CD4-positive, alpha-beta memory T cell (primary cell): ENCODE measurements at regions of chr15 and their contacts with region 1.

Region 1: DNA sequence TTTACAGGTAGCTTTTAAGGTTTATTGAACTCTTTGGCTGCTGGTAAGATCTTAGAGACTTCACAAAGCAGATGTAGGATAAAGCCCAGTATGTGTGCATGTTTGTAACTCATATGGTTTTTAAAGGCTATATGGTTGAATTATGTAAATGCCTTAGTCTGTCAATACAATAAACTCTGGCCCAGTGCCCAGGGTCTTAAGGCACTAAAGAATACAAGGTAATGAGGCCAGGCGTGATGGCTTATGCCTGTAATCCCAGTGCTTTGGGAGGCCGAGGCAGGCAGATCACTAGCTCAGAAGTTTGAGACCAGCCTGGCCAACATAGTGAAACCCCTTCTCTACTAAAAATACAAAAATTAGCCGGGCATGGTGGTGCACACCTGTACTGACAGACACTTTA is 170.3 kb upstream of the CGNL1 start:
- DNase-seq: no peak
- H3K4me3 ChIP-seq: no peak overlapping the region
- H3K4me3 Mint-ChIP-seq: no peak overlapping the region
- H3K27ac ChIP-seq: no peak overlapping the region
- H3K27ac Mint-ChIP-seq: no peak overlapping the region
- H3K4me1 ChIP-seq: no peaks in the 10 kb centered on the region
- H3K4me1 Mint-ChIP-seq: peaks cover 5 to 9% (median 7%) of the 10 kb centered on the region in 4 donors
- H3K27me3 ChIP-seq: no peaks in the 10 kb centered on the region
- H3K27me3 Mint-ChIP-seq: no peaks in the 10 kb centered on the region

Region 2: GRCh38 chr15:57224664-57225063 is 18.7 kb after region 1 on chr15:
- CTCF ChIA-PET with region 1: no interaction called
- POLR2A ChIA-PET with region 1: no interaction called
- intact Hi-C with region 1: loop called (anchors 2 kb)
- DNase-seq: no peak
- H3K4me3 ChIP-seq: no peak overlapping the region
- H3K4me3 Mint-ChIP-seq: no peak overlapping the region
- H3K27ac ChIP-seq: no peak overlapping the region
- H3K27ac Mint-ChIP-seq: no peak overlapping the region
- H3K4me1 ChIP-seq: no peaks in the 10 kb centered on the region
- H3K4me1 Mint-ChIP-seq: peaks cover 8 to 17% (median 10%) of the 10 kb centered on the region in 4 donors
- H3K27me3 ChIP-seq: no peaks in the 10 kb centered on the region
- H3K27me3 Mint-ChIP-seq: no peaks in the 10 kb centered on the region

Region 3: GRCh38 chr15:57251941-57252340 is 45.9 kb after region 1 on chr15:
- CTCF ChIA-PET with region 1: no interaction called
- POLR2A ChIA-PET with region 1: no interaction called
- intact Hi-C with region 1: no loop called
- DNase-seq: no peak
- H3K4me3 ChIP-seq: no peak overlapping the region
- H3K4me3 Mint-ChIP-seq: no peak overlapping the region
- H3K27ac ChIP-seq: no peak overlapping the region
- H3K27ac Mint-ChIP-seq: no peak overlapping the region
- H3K4me1 ChIP-seq: no peaks in the 10 kb centered on the region
- H3K4me1 Mint-ChIP-seq: no peaks in the 10 kb centered on the region
- H3K27me3 ChIP-seq: no peaks in the 10 kb centered on the region
- H3K27me3 Mint-ChIP-seq: no peaks in the 10 kb centered on the region